ENCODE measurements at regions of chr3 and their contacts with region 1.

Region 1: GRCh38 chr3:30606301-30607031 is at the start of gene TGFBR2:
- DNase-seq: peak; percentile 67 to 90 (median 69)
- H3K4me3 ChIP-seq: peak within 1 kb of the TSS; percentile 82 to 89
- H3K4me3 Mint-ChIP-seq: peak within 1 kb of the TSS; percentile 97 to 99 (median 99)
- H3K27ac ChIP-seq: peak within 1 kb of the TSS; percentile 85
- H3K27ac Mint-ChIP-seq: peak within 1 kb of the TSS; percentile 92 to 99 (median 98)
- H3K4me1 ChIP-seq: peaks cover 57% of the 10 kb centered on the region
- H3K4me1 Mint-ChIP-seq: peaks cover 43 to 67% (median 48%) of the 10 kb centered on the region in 4 donors
- H3K27me3 ChIP-seq: no peaks in the 10 kb centered on the region
- H3K27me3 Mint-ChIP-seq: no peaks in the 10 kb centered on the region
- total RNA-seq, gene TGFBR2: 110 TPM

Region 2: DNA sequence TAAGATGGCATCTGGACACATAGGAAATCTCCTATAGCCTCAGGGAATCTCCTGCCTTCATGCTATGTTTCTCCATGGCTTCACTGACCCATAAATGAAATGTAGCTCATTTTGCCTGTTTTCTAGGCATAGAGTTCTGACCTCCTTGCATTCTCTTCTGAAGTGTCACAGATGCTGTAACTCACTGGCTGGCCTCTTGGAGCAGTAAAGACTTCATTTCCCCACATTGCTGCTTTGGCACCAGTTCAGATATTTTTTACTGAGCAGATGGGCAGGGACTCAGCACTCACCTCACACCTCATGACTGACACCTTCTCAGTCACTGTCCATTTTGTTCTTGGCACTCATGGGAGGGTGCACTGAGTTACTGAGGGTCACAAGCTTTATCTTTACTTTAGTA is 286.8 kb before region 1 on chr3:
- CTCF ChIA-PET with region 1: interaction called, 14 read pairs
- POLR2A ChIA-PET with region 1: no interaction called
- intact Hi-C with region 1: no loop called
- DNase-seq: peak; percentile 45 to 54 (median 49)
- H3K4me3 ChIP-seq: no peak overlapping the region
- H3K4me3 Mint-ChIP-seq: no peak overlapping the region
- H3K27ac ChIP-seq: no peak overlapping the region
- H3K27ac Mint-ChIP-seq: peak overlapping the region in 1 of 7 donors; percentile 9
- H3K4me1 ChIP-seq: no peaks in the 10 kb centered on the region
- H3K4me1 Mint-ChIP-seq: peaks cover 3 to 8% (median 5%) of the 10 kb centered on the region in 4 donors
- H3K27me3 ChIP-seq: no peaks in the 10 kb centered on the region
- H3K27me3 Mint-ChIP-seq: no peaks in the 10 kb centered on the region

Region 3: DNA sequence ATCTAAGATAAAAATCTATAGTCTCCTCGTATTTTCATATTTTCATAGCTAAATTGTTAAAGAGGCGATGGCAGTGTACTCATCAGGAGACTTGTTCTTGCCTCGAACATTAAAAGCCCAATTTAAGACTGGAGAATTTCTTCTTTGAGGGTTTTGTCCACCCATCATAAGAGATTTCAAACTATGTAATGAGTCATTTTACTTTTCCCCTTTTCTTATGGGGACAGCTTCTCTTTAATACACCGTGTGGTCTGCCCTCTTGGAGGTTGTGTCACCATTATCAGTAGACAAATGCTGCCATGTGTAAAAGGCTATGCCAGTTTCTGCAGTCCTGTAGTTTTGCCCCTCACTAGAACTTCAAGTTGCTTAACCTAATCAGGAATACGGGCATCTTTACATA is 16.9 kb after region 1 on chr3:
- CTCF ChIA-PET with region 1: interaction called, 75 read pairs
- POLR2A ChIA-PET with region 1: interaction called, 290 read pairs
- intact Hi-C with region 1: no loop called
- DNase-seq: peak in 1 of 5 donors; percentile 41
- H3K4me3 ChIP-seq: no peak overlapping the region
- H3K4me3 Mint-ChIP-seq: peak overlapping the region; percentile 6 to 86 (median 69)
- H3K27ac ChIP-seq: peak overlapping the region; percentile 40
- H3K27ac Mint-ChIP-seq: peak overlapping the region; percentile 38 to 92 (median 90)
- H3K4me1 ChIP-seq: peaks cover 99% of the 10 kb centered on the region
- H3K4me1 Mint-ChIP-seq: peaks cover 70 to 98% (median 83%) of the 10 kb centered on the region in 4 donors
- H3K27me3 ChIP-seq: no peaks in the 10 kb centered on the region
- H3K27me3 Mint-ChIP-seq: no peaks in the 10 kb centered on the region

Region 4: GRCh38 chr3:30658328-30659052 is 52.0 kb after region 1 on chr3:
- CTCF ChIA-PET with region 1: interaction called, 11 read pairs
- POLR2A ChIA-PET with region 1: interaction called, 318 read pairs
- intact Hi-C with region 1: loop called (anchors 2 kb)
- DNase-seq: peak; percentile 68 to 77 (median 70)
- H3K4me3 ChIP-seq: peak overlapping the region; percentile 3 to 5
- H3K4me3 Mint-ChIP-seq: peak overlapping the region; percentile 62 to 87 (median 72)
- H3K27ac ChIP-seq: peak overlapping the region; percentile 80
- H3K27ac Mint-ChIP-seq: peak overlapping the region; percentile 90 to 98 (median 94)
- H3K4me1 ChIP-seq: peaks cover 100% of the 10 kb centered on the region
- H3K4me1 Mint-ChIP-seq: peaks cover 76 to 99% (median 90%) of the 10 kb centered on the region in 4 donors
- H3K27me3 ChIP-seq: no peaks in the 10 kb centered on the region
- H3K27me3 Mint-ChIP-seq: no peaks in the 10 kb centered on the region

Region 5: DNA sequence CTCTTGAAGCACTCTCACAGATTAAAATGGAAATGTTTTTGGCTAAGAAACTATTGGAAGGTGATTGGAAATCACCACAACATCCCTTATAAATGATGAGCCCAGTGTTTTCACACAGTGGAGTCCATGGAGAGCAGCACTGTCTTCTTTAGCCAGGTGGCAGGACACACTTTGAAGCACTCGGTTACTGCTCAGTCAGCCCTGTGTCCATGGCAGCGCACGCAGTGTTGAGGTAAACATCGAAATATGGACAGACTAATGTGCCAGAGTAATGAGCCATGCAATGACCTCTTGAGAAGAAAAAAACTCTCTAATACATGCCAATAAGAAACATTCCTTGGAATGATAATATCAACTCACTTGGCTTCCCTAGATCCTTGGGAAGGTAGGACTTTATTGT is 66.5 kb after region 1 on chr3:
- CTCF ChIA-PET with region 1: interaction called, 3 read pairs
- POLR2A ChIA-PET with region 1: interaction called, 94 read pairs
- intact Hi-C with region 1: no loop called
- DNase-seq: no peak
- H3K4me3 ChIP-seq: no peak overlapping the region
- H3K4me3 Mint-ChIP-seq: peak overlapping the region; percentile 32 to 81 (median 72)
- H3K27ac ChIP-seq: no peak overlapping the region
- H3K27ac Mint-ChIP-seq: peak overlapping the region in 6 of 7 donors; percentile 69 to 86 (median 76)
- H3K4me1 ChIP-seq: peaks cover 91% of the 10 kb centered on the region
- H3K4me1 Mint-ChIP-seq: peaks cover 75 to 100% (median 88%) of the 10 kb centered on the region in 4 donors
- H3K27me3 ChIP-seq: no peaks in the 10 kb centered on the region
- H3K27me3 Mint-ChIP-seq: no peaks in the 10 kb centered on the region